B cell (primary cell): ENCODE measurements at regions of chr7 and their contacts with region 1.

Region 1: GRCh38 chr7:3042861-3043489 is 692 bp downstream of the CARD11 start:
- DNase-seq: peak; percentile 82
- ATAC-seq: peak; percentile 69
- H3K4me3 ChIP-seq: peak overlapping the region; percentile 30 to 90 (median 74)
- H3K4me3 Mint-ChIP-seq: peak overlapping the region; percentile 96
- H3K27ac ChIP-seq: peak overlapping the region; percentile 72 to 94
- H3K27ac Mint-ChIP-seq: peak overlapping the region; percentile 94
- H3K4me1 ChIP-seq: peaks cover 48 to 56% of the 10 kb centered on the region in 2 donors
- H3K4me1 Mint-ChIP-seq: peaks cover 55% of the 10 kb centered on the region
- H3K27me3 ChIP-seq: no peaks in the 10 kb centered on the region
- H3K27me3 Mint-ChIP-seq: no peaks in the 10 kb centered on the region
- CTCF ChIP-seq: no peak

Region 2: DNA sequence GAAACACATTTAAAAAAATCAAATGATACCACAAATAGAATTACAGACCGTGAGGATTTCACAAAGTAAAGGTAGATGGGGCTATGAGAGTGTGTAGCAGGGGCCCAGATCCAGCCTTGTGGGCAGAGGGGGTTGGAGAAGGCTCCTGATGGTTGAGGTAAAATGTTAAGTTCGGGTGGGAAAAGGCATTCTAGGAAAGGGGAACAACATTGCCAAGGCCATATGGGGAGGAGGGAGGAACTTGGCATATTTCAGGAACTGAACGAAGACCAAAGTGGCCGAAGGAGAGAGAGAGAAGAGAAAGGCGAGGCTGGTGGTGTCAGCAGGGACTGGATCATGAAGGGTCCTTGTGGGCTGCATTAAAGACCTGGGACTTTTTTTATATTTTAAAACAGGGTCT is 98.2 kb before region 1 on chr7:
- CTCF ChIA-PET with region 1: interaction called, 3 read pairs
- POLR2A ChIA-PET with region 1: interaction called, 10 read pairs
- intact Hi-C with region 1: no loop called
- DNase-seq: no peak
- ATAC-seq: no peak
- H3K4me3 ChIP-seq: no peak overlapping the region
- H3K4me3 Mint-ChIP-seq: no peak overlapping the region
- H3K27ac ChIP-seq: no peak overlapping the region
- H3K27ac Mint-ChIP-seq: peak overlapping the region; percentile 46
- H3K4me1 ChIP-seq: peaks cover 9 to 13% of the 10 kb centered on the region in 2 donors
- H3K4me1 Mint-ChIP-seq: peaks cover 31% of the 10 kb centered on the region
- H3K27me3 ChIP-seq: no peaks in the 10 kb centered on the region
- H3K27me3 Mint-ChIP-seq: no peaks in the 10 kb centered on the region
- CTCF ChIP-seq: no peak

Region 3: GRCh38 chr7:2978403-2978802 is 64.6 kb before region 1 on chr7:
- CTCF ChIA-PET with region 1: interaction called, 5 read pairs
- POLR2A ChIA-PET with region 1: interaction called, 3 read pairs
- intact Hi-C with region 1: loop called (anchors 1 kb)
- DNase-seq: peak; percentile 96
- ATAC-seq: peak; percentile 84
- H3K4me3 ChIP-seq: peak overlapping the region; percentile 46 to 75 (median 63)
- H3K4me3 Mint-ChIP-seq: peak overlapping the region; percentile 98
- H3K27ac ChIP-seq: peak overlapping the region; percentile 77 to 92
- H3K27ac Mint-ChIP-seq: peak overlapping the region; percentile 93
- H3K4me1 ChIP-seq: peaks cover 60 to 83% of the 10 kb centered on the region in 2 donors
- H3K4me1 Mint-ChIP-seq: peaks cover 81% of the 10 kb centered on the region
- H3K27me3 ChIP-seq: no peaks in the 10 kb centered on the region
- H3K27me3 Mint-ChIP-seq: no peaks in the 10 kb centered on the region
- CTCF ChIP-seq: no peak

Region 4: GRCh38 chr7:3092468-3092867 is 49.5 kb after region 1 on chr7:
- CTCF ChIA-PET with region 1: interaction called, 7 read pairs
- POLR2A ChIA-PET with region 1: interaction called, 8 read pairs
- intact Hi-C with region 1: loop called (anchors 2 kb)
- DNase-seq: peak; percentile 83
- ATAC-seq: peak; percentile 86
- H3K4me3 ChIP-seq: peak overlapping the region in 1 of 5 experiments; percentile 20
- H3K4me3 Mint-ChIP-seq: peak overlapping the region; percentile 38
- H3K27ac ChIP-seq: peak overlapping the region; percentile 54 to 76
- H3K27ac Mint-ChIP-seq: peak overlapping the region; percentile 85
- H3K4me1 ChIP-seq: peaks cover 37 to 50% of the 10 kb centered on the region in 2 donors
- H3K4me1 Mint-ChIP-seq: peaks cover 45% of the 10 kb centered on the region
- H3K27me3 ChIP-seq: no peaks in the 10 kb centered on the region
- H3K27me3 Mint-ChIP-seq: no peaks in the 10 kb centered on the region
- CTCF ChIP-seq: no peak

Region 5: DNA sequence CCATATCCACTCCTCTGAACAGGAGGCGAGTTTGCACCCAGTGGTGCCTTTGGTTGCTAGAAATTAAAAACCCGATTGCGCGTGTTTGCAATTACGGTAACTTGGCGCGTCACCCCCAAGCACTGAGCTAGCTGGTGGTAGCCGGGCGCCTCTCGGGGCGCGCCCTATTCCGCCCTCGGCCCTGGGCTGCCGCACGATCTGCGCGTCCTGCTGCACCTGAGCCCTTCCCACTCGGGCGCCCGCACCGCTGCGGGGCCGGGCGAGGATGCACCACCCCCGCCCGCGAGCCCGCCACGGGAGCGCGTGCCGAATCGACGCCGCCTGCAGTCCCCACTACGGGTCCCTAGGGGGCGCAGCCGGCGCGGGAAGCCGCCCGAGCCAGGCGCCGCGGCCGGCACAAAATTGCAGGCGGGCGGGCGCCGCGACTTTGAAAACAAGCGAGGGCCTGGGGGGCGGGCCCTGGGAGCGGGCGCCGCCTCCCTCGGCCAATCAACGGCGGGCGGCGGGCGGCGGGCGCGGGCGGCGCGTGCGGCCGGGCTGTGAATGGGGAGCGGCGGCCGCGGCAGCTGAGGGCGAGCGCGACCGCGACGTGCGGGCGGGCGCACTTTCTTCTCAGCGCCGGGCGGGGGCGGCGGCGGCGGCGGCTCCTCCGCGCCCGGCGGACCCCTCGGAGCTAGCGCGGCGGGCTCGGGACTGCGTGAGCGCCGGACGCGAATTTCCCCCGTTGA is 257.8 kb after region 1 on chr7 and contains the start of gene SDK1:
- CTCF ChIA-PET with region 1: no interaction called
- POLR2A ChIA-PET with region 1: no interaction called
- intact Hi-C with region 1: loop called (anchors 5 kb)
- DNase-seq: peak; percentile 96
- ATAC-seq: peak; percentile 89
- H3K4me3 ChIP-seq: peak within 1 kb of the TSS in 4 of 5 experiments; percentile 21 to 60 (median 46)
- H3K4me3 Mint-ChIP-seq: peak within 1 kb of the TSS; percentile 88
- H3K27ac ChIP-seq: no peak within 1 kb of the TSS
- H3K27ac Mint-ChIP-seq: no peak within 1 kb of the TSS
- H3K4me1 ChIP-seq: peaks cover 16% of the 10 kb centered on the region in 2 donors
- H3K4me1 Mint-ChIP-seq: peaks cover 14% of the 10 kb centered on the region
- H3K27me3 ChIP-seq: peaks cover 0 to 35% (median 19%) of the 10 kb centered on the region in 4 experiments
- H3K27me3 Mint-ChIP-seq: peaks cover 46% of the 10 kb centered on the region
- CTCF ChIP-seq: peak; percentile 83
- total RNA-seq, gene SDK1: 0.66 and 2.0 TPM in 2 replicates